ENCODE measurements at regions of chr15 and their contacts with region 1.

Region 1: DNA sequence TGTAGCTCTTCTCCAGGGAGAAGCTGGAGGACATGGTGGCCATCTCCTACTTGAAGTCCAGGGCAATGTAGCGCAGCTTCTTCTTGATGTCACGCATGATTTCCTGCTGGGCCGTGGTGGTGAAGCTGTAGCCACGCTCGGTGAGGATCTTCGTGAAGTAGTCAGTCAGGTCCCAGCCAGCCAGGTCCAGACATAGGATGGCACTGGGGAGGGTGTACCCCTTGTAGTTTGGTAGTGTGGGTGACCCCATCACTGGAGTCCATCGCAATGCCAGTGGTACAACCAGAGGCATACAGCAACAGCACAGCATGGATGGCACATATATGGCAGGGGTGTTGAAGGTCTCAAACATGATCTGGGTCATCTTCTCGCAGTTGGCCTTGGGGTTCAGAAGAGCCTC is 7.0 kb upstream of the LPCAT4 start:
- DNase-seq: no peak
- H3K4me3 ChIP-seq: no peak overlapping the region
- H3K27ac ChIP-seq: no peak overlapping the region
- H3K4me1 ChIP-seq: no peaks in the 10 kb centered on the region
- H3K27me3 ChIP-seq: no peaks in the 10 kb centered on the region

Region 2: GRCh38 chr15:33045066-33045810 is 1328.7 kb before region 1 on chr15:
- in situ Hi-C with region 1: no loop called
- DNase-seq: no peak
- H3K4me3 ChIP-seq: no peak overlapping the region
- H3K27ac ChIP-seq: no peak overlapping the region
- H3K4me1 ChIP-seq: no peaks in the 10 kb centered on the region
- H3K27me3 ChIP-seq: peaks cover 7% of the 10 kb centered on the region; the same call in 1 of the 2 replicates

Region 3: DNA sequence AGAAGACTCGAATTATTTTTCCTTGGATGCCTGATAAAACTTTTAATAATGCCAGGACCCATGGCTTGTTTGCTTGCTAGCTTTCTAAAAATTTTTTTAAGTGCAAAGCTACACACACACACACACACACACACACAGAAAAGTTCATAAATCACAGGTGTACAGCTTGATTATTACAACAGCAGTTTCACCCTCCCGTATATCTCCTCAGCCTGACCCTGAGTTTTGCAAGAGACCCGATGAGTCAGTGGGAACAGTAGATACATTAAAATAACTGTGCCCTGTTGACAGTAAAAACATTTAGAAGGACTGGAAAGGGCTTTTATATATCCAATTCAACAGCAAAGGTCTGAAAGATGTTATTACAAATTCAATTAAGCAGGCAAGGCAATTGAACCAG is 102.5 kb before region 1 on chr15:
- in situ Hi-C with region 1: no loop called
- DNase-seq: peak; percentile 77
- H3K4me3 ChIP-seq: no peak overlapping the region
- H3K27ac ChIP-seq: no peak overlapping the region
- H3K4me1 ChIP-seq: peaks cover 19% of the 10 kb centered on the region
- H3K27me3 ChIP-seq: no peaks in the 10 kb centered on the region

Region 4: GRCh38 chr15:34439878-34440277 is 65.9 kb after region 1 on chr15:
- in situ Hi-C with region 1: loop called (anchors 10 kb)
- DNase-seq: no peak
- H3K4me3 ChIP-seq: no peak overlapping the region
- H3K27ac ChIP-seq: no peak overlapping the region
- H3K4me1 ChIP-seq: peaks cover 7% of the 10 kb centered on the region; the same call in 1 of the 2 replicates
- H3K27me3 ChIP-seq: peaks cover 7% of the 10 kb centered on the region; the same call in 1 of the 2 replicates

Region 5: GRCh38 chr15:34693053-34693744 is 319.2 kb after region 1 on chr15:
- in situ Hi-C with region 1: no loop called
- DNase-seq: peak; percentile 30
- H3K4me3 ChIP-seq: no peak overlapping the region
- H3K27ac ChIP-seq: no peak overlapping the region
- H3K4me1 ChIP-seq: no peaks in the 10 kb centered on the region; the same call in 1 of the 2 replicates
- H3K27me3 ChIP-seq: no peaks in the 10 kb centered on the region

Region 6: GRCh38 chr15:35697549-35698299 is 1323.8 kb after region 1 on chr15:
- in situ Hi-C with region 1: no loop called
- DNase-seq: peak; percentile 35
- H3K4me3 ChIP-seq: no peak overlapping the region
- H3K27ac ChIP-seq: no peak overlapping the region
- H3K4me1 ChIP-seq: peaks cover 31% of the 10 kb centered on the region
- H3K27me3 ChIP-seq: no peaks in the 10 kb centered on the region